Dorsolateral prefrontal cortex (tissue), 120 donors: ENCODE measurements at regions of chr13 and their contacts with region 1.

Region 1: GRCh38 chr13:66689628-66690027 is 540.5 kb downstream of the PCDH9 start:
- DNase-seq: peak in 2 of 10 donors; percentile 47 to 67
- H3K4me3 ChIP-seq: peak overlapping the region in 5 of 59 donors; percentile 1 to 26 (median 11)
- H3K27ac ChIP-seq: peak overlapping the region in 18 of 59 donors; percentile 0 to 70 (median 19)
- H3K27me3 ChIP-seq: no peaks in the 10 kb centered on the region
- CTCF ChIP-seq: peak in 55 of 56 donors; percentile 19 to 72 (median 53)

Region 2: DNA sequence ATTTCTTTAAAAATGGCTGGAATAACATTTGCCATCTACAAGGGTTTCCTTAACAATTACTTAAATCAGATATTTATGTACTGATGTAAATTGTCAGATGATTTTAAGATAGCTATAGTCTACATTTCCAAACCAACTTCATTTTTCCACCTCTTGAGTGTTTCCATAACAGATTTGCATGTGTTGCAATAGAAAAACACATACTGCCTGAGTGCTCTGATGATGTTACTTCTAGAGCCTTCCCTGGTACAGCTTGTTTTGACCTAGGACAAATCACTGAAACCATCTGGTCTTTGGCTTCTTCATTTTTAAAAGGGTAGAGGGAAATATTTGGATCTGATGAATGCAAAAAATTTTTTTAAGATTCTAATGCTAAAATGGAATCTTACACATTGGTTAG is 294.6 kb after region 1 on chr13:
- intact Hi-C with region 1: loop called in 1 of 2 experiments (anchors 10 kb)
- DNase-seq: no peak
- H3K4me3 ChIP-seq: no peak overlapping the region
- H3K27ac ChIP-seq: peak overlapping the region in 13 of 59 donors; percentile 1 to 57 (median 28)
- H3K27me3 ChIP-seq: no peaks in the 10 kb centered on the region
- CTCF ChIP-seq: no peak

Region 3: GRCh38 chr13:67230404-67231288 is 541.0 kb after region 1 on chr13:
- intact Hi-C with region 1: loop called (anchors 5 kb)
- DNase-seq: peak; percentile 39 to 99 (median 99)
- H3K4me3 ChIP-seq: peak overlapping the region; percentile 53 to 97 (median 84)
- H3K27ac ChIP-seq: peak overlapping the region; percentile 85 to 99 (median 96)
- H3K27me3 ChIP-seq: no peaks in the 10 kb centered on the region
- CTCF ChIP-seq: peak in 17 of 56 donors; percentile 5 to 44 (median 23)